ENCODE measurements at regions of chr1 and their contacts with region 1.

Region 1: DNA sequence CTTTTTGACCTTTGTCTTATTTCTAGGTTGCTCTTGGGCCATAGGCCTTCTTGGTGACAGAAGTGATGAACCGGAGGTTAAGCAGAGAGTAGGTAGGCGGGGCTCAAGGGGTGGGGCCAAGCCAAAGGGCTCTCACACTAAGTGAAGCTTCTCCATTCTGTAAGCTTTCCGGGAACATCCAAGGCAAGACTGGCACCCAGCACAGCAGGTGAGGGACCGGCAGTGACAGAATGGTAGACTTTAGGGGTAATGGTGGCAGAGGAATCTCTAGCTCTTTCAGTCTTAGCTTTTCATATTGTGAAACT is at the start of gene TNFAIP8L2:
- DNase-seq: peak; percentile 65 to 86
- ATAC-seq: peak; percentile 90
- total RNA-seq, gene TNFAIP8L2: 0.40 to 2.8 TPM

Region 2: GRCh38 chr1:150748878-150749719 is 407.4 kb before region 1 on chr1:
- intact Hi-C with region 1: no loop called
- DNase-seq: peak in 1 of 2 donors; percentile 14
- ATAC-seq: peak; percentile 62

Region 3: GRCh38 chr1:151024540-151025146 is 131.8 kb before region 1 on chr1:
- intact Hi-C with region 1: loop called in 1 of 2 experiments (anchors 10 kb)
- DNase-seq: peak; percentile 70 to 88
- ATAC-seq: peak; percentile 88

Region 4: GRCh38 chr1:151059078-151059907 is 97.2 kb before region 1 on chr1 and contains the start of gene CDC42SE1:
- intact Hi-C with region 1: no loop called
- DNase-seq: peak; percentile 81 to 89
- ATAC-seq: peak; percentile 89
- total RNA-seq, gene CDC42SE1: 65.5 to 74.4 TPM

Region 5: GRCh38 chr1:151106894-151107293 is 49.6 kb before region 1 on chr1:
- intact Hi-C with region 1: loop called (anchors 2 to 10 kb)
- DNase-seq: no peak
- ATAC-seq: no peak